Spleen (tissue), 13 donors: ENCODE measurements at regions of chr11 and their contacts with region 1.

Region 1: DNA sequence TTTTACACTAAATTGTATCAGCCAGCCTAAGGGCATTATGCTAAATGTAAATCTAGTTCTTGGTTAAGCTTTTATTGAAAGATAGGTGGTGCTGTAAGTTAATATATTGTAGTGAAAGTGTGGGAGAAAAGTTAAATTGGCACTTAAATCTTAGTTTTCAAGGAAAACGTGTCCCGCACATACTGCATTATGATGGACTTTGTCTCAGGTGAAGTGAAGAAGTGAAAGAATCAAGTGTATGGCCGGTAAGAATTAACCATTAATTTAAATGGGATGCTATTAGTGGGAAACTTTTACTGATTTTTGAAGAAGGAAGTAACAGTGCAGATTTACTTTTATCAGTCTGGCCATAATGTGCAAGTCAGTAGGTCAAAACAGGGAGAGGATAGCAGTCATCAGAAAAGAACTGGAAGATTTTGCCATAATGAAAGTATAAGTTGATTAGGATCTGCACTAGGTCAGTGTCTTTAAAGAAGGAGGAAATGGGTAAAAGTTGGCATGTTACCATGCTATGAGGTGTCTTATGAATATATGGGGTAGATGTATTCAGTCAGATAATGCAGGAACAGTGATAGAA is 81.6 kb downstream of the PDHX start:
- DNase-seq: no peak
- H3K4me3 ChIP-seq: no peak overlapping the region
- H3K27ac ChIP-seq: peak overlapping the region in 2 of 8 donors; percentile 9 to 36
- H3K4me1 ChIP-seq: peaks cover 9 to 29% (median 16%) of the 10 kb centered on the region in 6 donors
- H3K27me3 ChIP-seq: no peaks in the 10 kb centered on the region
- CTCF ChIP-seq: peak in 10 of 11 experiments; percentile 25 to 87 (median 69)
- POLR2A ChIP-seq: no peak

Region 2: GRCh38 chr11:35066783-35067423 is 68.9 kb after region 1 on chr11:
- intact Hi-C with region 1: no loop called
- DNase-seq: no peak
- H3K4me3 ChIP-seq: peak overlapping the region in 1 of 8 donors; percentile 19
- H3K27ac ChIP-seq: peak overlapping the region in 3 of 8 donors; percentile 46 to 67 (median 47)
- H3K4me1 ChIP-seq: peaks cover 8 to 58% (median 22%) of the 10 kb centered on the region in 6 donors
- H3K27me3 ChIP-seq: no peaks in the 10 kb centered on the region
- CTCF ChIP-seq: no peak
- POLR2A ChIP-seq: no peak

Region 3: DNA sequence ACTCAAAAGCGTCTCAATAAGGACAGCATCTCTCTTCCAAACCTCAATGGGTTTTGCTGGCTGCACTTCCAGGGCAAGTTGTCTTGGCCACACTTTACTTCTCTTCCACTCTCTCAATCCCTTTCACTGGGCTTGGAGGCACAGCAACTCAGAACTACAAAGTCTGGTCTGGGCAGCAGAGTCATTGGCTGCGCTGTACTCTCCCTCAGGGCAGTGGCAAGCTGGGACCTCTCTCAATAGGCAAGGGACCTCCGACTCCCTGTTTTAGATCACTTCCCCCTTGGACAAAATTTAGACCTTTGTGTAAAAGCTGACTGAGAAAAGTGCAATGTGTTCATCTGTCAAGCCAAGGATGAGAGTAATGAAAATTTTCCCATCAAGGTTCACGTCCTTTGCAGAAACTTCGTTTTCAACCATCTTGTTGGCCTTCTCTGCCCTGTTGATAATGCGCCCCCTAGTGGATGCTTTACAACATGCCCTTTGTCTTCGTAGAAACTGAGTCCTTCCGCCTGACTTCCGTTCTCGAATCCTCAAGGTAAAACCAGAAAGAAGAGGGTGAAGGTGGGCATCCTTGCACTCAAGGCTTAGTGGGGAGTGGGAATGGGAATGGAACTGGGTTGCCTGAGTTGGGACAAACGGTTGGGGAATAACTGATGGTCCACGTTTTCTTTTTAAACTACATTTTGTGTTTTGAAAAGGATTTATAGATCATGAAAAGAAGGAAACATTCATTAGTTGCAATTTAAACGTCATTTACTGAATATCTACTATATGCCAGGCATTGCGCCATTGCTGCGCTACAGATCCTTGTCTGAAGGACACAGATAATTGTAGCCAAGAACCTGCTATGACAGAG is 240.0 kb after region 1 on chr11:
- intact Hi-C with region 1: loop called (anchors 5 kb)
- DNase-seq: no peak
- H3K4me3 ChIP-seq: no peak overlapping the region
- H3K27ac ChIP-seq: no peak overlapping the region
- H3K4me1 ChIP-seq: peaks cover 10 to 44% (median 27%) of the 10 kb centered on the region in 6 donors
- H3K27me3 ChIP-seq: no peaks in the 10 kb centered on the region
- CTCF ChIP-seq: peak; percentile 43 to 88 (median 83)
- POLR2A ChIP-seq: no peak

Region 4: GRCh38 chr11:35391922-35392813 is 394.1 kb after region 1 on chr11:
- intact Hi-C with region 1: loop called (anchors 10 kb)
- DNase-seq: peak; percentile 94
- H3K4me3 ChIP-seq: peak overlapping the region in 1 of 8 donors; percentile 12
- H3K27ac ChIP-seq: no peak overlapping the region
- H3K4me1 ChIP-seq: peaks cover 4 to 20% (median 16%) of the 10 kb centered on the region in 6 donors
- H3K27me3 ChIP-seq: peaks cover 0 to 7% (median 0%) of the 10 kb centered on the region in 7 donors
- CTCF ChIP-seq: peak; percentile 74 to 93 (median 89)
- POLR2A ChIP-seq: no peak

Region 5: GRCh38 chr11:35485656-35486322 is 487.7 kb after region 1 on chr11:
- intact Hi-C with region 1: loop called (anchors 10 kb)
- DNase-seq: peak; percentile 85
- H3K4me3 ChIP-seq: no peak overlapping the region
- H3K27ac ChIP-seq: no peak overlapping the region
- H3K4me1 ChIP-seq: peaks cover 0 to 5% (median 0%) of the 10 kb centered on the region in 6 donors
- H3K27me3 ChIP-seq: peaks cover 0 to 40% (median 0%) of the 10 kb centered on the region in 7 donors
- CTCF ChIP-seq: peak; percentile 33 to 96 (median 89)
- POLR2A ChIP-seq: no peak